GM12878 (cell line): ENCODE measurements at regions of chr2 and their contacts with region 1.

Region 1: DNA sequence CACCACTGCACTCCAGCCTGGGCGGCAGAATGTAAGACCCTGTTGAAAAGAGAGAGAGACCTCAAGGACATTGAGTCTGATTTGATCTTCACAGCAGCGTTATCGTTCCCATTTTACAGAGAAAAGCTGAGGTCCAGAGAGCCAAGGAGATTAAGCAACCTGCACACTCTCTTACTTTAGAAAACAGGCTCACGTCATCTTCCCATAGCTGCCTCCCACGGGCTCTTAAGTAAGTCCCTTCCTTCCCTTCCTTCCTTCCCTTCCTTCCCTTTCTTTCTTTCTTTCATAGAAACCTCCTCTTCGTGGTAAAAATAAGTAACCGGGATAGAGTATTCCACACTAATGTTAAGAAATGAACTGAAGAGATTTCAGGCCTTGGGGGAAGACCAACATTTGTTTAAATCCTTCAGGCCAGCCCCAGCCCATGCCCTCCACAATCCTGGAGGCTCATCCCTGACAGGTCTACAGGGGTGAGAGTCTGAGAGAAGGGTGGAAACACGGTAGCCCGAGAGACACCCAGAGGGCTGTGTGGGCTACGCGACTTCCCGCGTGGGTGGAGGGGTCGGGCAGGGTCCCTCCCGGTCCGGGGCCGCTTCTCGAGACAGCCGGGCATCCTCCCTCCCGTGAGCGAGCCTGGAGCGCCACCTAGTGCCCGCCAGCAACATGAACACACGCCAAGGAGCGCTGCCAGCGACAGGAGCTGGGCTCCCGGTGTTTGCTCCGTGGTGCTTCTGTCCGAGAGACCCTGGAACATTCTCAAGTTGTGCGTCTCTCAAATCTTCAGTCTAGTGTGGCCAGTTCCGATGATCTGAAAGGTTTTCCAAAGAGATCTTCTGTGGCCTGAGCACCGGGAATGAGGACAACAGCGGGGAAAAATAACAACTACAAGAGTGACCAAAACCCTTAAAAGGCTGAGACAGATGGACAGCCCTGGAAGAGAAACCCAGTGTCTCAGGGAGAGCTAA is 160.3 kb downstream of the INO80D start:
- DNase-seq: no peak
- ATAC-seq: peak; percentile 99
- H3K4me3 ChIP-seq: no peak overlapping the region
- H3K27ac ChIP-seq: no peak overlapping the region
- H3K4me1 ChIP-seq: no peaks in the 10 kb centered on the region
- H3K27me3 ChIP-seq: peaks cover 0 to 3% of the 10 kb centered on the region in 2 experiments; a peak in 3 of 4 replicates
- CTCF ChIP-seq: peak; percentile 82 to 90 (median 89)
- EP300 ChIP-seq: no peak
- POLR2A ChIP-seq: no peak
- RAD21 ChIP-seq: peak; percentile 84

Region 2: GRCh38 chr2:204325468-204325867 is 1600.2 kb before region 1 on chr2:
- CTCF ChIA-PET with region 1: no interaction called
- POLR2A ChIA-PET with region 1: no interaction called
- RAD21 ChIA-PET with region 1: no interaction called
- SMC1A ChIA-PET with region 1: interaction called, 3 read pairs
- in situ Hi-C with region 1: no loop called
- intact Hi-C with region 1: loop called (anchors 5 kb)
- DNase-seq: no peak
- ATAC-seq: peak; percentile 87
- H3K4me3 ChIP-seq: no peak overlapping the region
- H3K27ac ChIP-seq: no peak overlapping the region
- H3K4me1 ChIP-seq: no peaks in the 10 kb centered on the region
- H3K27me3 ChIP-seq: no peaks in the 10 kb centered on the region
- CTCF ChIP-seq: peak; percentile 72 to 83 (median 72)
- EP300 ChIP-seq: no peak
- POLR2A ChIP-seq: no peak
- RAD21 ChIP-seq: peak; percentile 90

Region 3: GRCh38 chr2:205766779-205767359 is 158.8 kb before region 1 on chr2:
- CTCF ChIA-PET with region 1: interaction called, 5 read pairs
- POLR2A ChIA-PET with region 1: no interaction called
- RAD21 ChIA-PET with region 1: no interaction called
- SMC1A ChIA-PET with region 1: no interaction called
- in situ Hi-C with region 1: loop called (anchors 5 kb)
- intact Hi-C with region 1: loop called (anchors 2 kb)
- DNase-seq: no peak
- ATAC-seq: peak; percentile 60
- H3K4me3 ChIP-seq: no peak overlapping the region
- H3K27ac ChIP-seq: no peak overlapping the region
- H3K4me1 ChIP-seq: no peaks in the 10 kb centered on the region
- H3K27me3 ChIP-seq: peaks cover 0 to 2% of the 10 kb centered on the region in 2 experiments; a peak in 1 of 4 replicates
- CTCF ChIP-seq: peak; percentile 77 to 89 (median 79)
- EP300 ChIP-seq: no peak
- POLR2A ChIP-seq: no peak
- RAD21 ChIP-seq: peak; percentile 67

Region 4: DNA sequence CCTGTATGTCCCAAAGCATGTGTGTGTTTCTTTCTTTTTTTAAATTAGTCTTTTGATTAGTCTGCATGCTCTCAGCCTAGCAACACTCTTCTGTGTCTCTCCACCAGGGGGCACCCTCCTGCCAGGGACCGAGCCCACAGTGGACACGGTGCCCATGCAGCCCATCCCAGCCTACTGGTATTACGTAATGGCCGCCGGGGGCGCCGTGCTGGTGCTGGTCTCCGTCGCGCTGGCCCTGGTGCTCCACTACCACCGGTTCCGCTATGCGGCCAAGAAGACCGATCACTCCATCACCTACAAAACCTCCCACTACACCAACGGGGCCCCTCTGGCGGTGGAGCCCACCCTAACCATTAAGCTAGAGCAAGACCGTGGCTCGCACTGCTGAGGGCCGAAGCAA is 149.5 kb before region 1 on chr2:
- CTCF ChIA-PET with region 1: interaction called, 57 read pairs
- POLR2A ChIA-PET with region 1: no interaction called
- RAD21 ChIA-PET with region 1: interaction called, 15 read pairs
- SMC1A ChIA-PET with region 1: interaction called, 12 read pairs
- in situ Hi-C with region 1: loop called (anchors 5 kb)
- intact Hi-C with region 1: loop called (anchors 2 kb)
- DNase-seq: no peak
- ATAC-seq: peak; percentile 93
- H3K4me3 ChIP-seq: no peak overlapping the region
- H3K27ac ChIP-seq: no peak overlapping the region
- H3K4me1 ChIP-seq: no peaks in the 10 kb centered on the region
- H3K27me3 ChIP-seq: no peaks in the 10 kb centered on the region
- CTCF ChIP-seq: peak; percentile 56 to 68 (median 64)
- EP300 ChIP-seq: no peak
- POLR2A ChIP-seq: no peak
- RAD21 ChIP-seq: peak; percentile 61

Region 5: GRCh38 chr2:205903638-205904037 is 22.0 kb before region 1 on chr2:
- CTCF ChIA-PET with region 1: interaction called, 11 read pairs
- POLR2A ChIA-PET with region 1: no interaction called
- RAD21 ChIA-PET with region 1: interaction called, 6 read pairs
- SMC1A ChIA-PET with region 1: interaction called, 6 read pairs
- in situ Hi-C with region 1: no loop called
- intact Hi-C with region 1: no loop called
- DNase-seq: no peak
- ATAC-seq: peak; percentile 91
- H3K4me3 ChIP-seq: no peak overlapping the region
- H3K27ac ChIP-seq: no peak overlapping the region
- H3K4me1 ChIP-seq: no peaks in the 10 kb centered on the region
- H3K27me3 ChIP-seq: no peaks in the 10 kb centered on the region; a peak in 1 of 4 replicates
- CTCF ChIP-seq: peak in 2 of 3 experiments; percentile 37 to 49; a peak in 4 of 6 replicates
- EP300 ChIP-seq: no peak
- POLR2A ChIP-seq: no peak
- RAD21 ChIP-seq: no peak

Region 6: GRCh38 chr2:205947621-205948495 is 22.2 kb after region 1 on chr2:
- CTCF ChIA-PET with region 1: interaction called, 23 read pairs
- POLR2A ChIA-PET with region 1: no interaction called
- RAD21 ChIA-PET with region 1: interaction called, 5 read pairs
- SMC1A ChIA-PET with region 1: interaction called, 4 read pairs
- in situ Hi-C with region 1: no loop called
- intact Hi-C with region 1: no loop called
- DNase-seq: no peak
- ATAC-seq: peak; percentile 92
- H3K4me3 ChIP-seq: no peak overlapping the region
- H3K27ac ChIP-seq: no peak overlapping the region
- H3K4me1 ChIP-seq: no peaks in the 10 kb centered on the region
- H3K27me3 ChIP-seq: no peaks in the 10 kb centered on the region; a peak in 2 of 4 replicates
- CTCF ChIP-seq: peak; percentile 84 to 97 (median 89)
- EP300 ChIP-seq: no peak
- POLR2A ChIP-seq: no peak
- RAD21 ChIP-seq: peak; percentile 77